ENCODE measurements at regions of chr17 and their contacts with region 1.

Region 1: DNA sequence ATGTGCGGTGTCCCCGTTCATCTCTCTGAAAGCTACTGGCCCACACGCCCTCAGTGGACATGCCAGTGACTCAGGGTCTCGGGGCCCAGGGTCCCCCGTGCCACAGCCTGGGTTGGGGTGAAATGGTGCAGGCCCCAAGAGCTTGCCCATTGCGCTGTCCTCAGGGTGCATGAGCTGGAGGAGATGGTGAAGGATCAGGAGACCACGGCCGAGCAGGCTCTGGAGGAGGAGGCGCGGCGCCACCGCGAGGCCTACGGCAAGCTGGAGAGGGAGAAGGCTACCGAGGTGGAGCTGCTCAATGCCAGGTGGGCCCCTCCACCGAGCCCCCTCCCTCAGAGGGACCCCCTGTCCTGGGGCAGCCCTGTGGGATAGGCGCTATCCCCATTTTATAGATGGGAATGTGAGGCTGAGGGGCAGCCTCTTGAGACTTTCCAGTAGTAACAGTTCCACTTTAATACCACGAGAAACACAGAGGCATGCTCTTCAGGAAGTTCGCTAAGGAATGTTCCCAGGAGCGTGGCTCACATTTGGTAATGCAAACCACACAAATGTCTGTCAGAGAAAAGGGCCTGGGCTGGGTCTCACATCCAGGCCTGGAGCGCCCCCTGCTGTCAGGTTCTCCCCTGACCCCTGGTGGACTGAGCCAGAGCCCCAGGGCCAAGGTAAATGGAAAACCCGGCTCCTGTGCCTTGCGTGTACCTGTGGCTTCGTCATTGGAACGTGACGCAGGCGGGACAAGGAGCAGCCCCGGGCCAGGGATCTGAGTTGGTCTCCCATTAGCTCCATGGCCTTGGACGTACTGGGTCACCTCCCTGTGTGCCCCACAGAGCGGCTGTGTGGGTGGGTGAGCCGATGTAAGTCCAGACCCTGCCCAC is 133.7 kb downstream of the RAB11FIP4 start:
- DNase-seq: peak; percentile 89
- ATAC-seq: peak; percentile 78
- H3K4me3 Mint-ChIP-seq: no peak overlapping the region
- H3K27ac Mint-ChIP-seq: peak overlapping the region; percentile 24
- H3K4me1 Mint-ChIP-seq: peaks cover 9% of the 10 kb centered on the region
- H3K27me3 Mint-ChIP-seq: no peaks in the 10 kb centered on the region
- CTCF ChIP-seq: peak; percentile 88

Region 2: DNA sequence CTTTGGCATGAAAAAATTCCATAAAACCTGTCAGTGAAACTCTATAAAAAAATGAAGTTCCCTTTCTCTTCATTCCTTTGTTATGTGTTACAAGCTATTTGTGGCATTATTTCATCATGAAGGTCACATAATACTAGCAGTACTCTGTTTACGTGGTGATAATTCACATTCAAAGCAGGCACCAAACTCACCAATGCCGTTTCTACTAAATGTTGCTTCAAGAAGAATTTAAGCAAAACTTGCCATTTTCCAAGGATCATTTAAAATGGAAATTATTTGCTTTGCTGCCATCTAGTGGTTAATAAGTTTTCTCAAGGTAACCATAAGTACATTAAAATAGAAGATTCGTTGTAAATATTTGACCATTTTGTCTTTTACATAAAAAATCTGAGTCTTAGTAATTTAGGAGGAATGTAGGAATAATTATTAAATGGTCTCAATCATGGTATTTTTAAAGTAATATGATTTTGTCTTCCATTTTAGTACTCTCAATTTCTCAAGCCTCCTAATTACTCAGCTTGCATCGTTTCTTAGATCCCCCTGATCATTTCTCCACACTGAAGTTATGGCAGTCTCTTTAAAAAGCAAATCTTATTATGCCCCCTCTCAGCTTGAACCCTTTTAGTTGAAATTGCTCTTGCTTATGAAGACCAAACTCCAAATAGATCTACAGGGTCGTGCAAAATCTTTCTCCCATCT is 309.0 kb before region 1 on chr17:
- CTCF ChIA-PET with region 1: no interaction called
- POLR2A ChIA-PET with region 1: no interaction called
- intact Hi-C with region 1: loop called (anchors 5 kb)
- DNase-seq: no peak
- ATAC-seq: no peak
- H3K4me3 Mint-ChIP-seq: no peak overlapping the region
- H3K27ac Mint-ChIP-seq: no peak overlapping the region
- H3K4me1 Mint-ChIP-seq: no peaks in the 10 kb centered on the region
- H3K27me3 Mint-ChIP-seq: no peaks in the 10 kb centered on the region
- CTCF ChIP-seq: peak; percentile 72

Region 3: DNA sequence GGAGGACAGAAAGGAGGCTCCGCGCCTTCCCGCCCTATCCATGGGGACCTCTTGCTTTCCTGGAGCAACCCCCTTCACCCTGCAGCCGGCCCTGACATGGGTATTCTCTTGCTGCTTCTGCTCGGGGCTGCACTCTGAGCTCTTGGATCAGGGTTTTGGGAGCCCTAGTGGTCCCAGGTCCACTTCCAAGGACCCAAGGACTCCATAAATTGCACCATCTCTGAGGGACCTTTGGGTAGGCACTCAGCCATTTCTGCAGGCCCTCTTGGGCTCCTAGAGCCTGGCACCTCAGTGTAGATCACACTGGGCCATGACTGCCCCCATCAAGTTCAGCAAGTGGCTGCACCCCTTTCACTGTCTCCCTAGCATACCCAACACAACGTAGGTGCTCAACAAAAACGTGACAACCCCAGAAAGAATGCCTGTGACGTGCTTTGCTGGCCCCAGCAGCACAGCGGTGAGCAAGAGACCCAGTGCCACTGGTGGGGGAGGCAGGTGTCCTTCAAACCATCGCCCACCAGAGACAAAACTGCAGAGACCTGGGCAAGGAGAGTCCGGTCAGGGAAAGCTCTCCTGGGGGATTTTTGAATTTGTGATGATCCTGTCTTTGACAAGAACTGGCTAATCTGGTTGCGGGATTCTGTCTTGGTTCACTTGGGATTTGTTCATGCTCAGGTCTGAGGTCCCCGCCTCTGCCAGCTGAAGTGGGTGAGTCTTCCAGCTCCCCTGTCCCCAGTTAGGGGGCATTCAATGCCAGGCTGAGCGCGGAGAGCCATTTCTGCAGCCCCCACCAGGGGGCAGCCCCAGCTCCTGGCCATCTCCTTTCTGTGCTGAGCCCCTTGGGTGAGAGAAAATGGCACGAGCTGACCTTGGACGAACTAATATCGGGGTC is 136.1 kb before region 1 on chr17:
- CTCF ChIA-PET with region 1: interaction called, 53 read pairs
- POLR2A ChIA-PET with region 1: no interaction called
- intact Hi-C with region 1: loop called (anchors 1 kb)
- DNase-seq: peak; percentile 46
- ATAC-seq: peak; percentile 76
- H3K4me3 Mint-ChIP-seq: no peak overlapping the region
- H3K27ac Mint-ChIP-seq: no peak overlapping the region
- H3K4me1 Mint-ChIP-seq: peaks cover 15% of the 10 kb centered on the region
- H3K27me3 Mint-ChIP-seq: peaks cover 31% of the 10 kb centered on the region
- CTCF ChIP-seq: no peak

Region 4: DNA sequence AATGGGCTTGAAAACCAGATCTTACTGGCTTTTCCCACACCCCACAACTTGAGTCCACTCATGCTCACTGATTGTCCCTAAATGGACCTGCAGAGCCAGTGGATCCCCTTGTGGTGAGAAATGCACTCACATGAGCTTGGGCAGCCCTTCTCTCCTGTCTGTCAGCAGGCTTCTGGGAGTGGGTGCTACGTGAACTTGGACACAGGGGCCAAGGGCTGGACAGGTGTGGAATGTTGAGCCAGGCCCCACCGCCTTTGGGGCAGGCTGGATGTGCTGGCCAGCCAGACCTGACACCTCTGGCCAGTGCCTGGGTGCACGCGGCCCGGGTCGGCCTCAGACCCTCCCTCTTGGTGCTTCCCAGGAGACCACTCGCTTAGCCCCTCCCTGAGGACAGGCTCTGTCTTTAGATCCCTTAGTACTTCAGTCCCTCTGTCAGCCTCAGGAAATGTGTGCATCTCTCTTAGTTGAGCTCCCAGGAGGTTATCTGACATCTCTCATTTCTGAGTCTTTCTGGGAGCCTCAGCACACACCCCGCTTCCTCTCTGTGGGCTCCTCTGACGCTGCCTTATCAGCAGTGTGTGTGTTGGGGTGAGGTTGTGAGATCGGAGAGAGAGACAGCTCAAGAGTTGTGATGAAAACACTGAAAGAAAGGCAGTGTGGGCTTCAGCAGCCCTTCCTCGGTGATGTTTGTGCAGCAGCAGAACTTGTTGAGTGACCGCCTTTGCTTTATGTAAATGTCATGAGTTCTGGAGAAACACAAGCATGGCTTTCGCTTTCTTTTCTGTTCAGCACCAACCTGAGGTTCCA is 16.7 kb before region 1 on chr17:
- CTCF ChIA-PET with region 1: interaction called, 43 read pairs
- POLR2A ChIA-PET with region 1: interaction called, 4 read pairs
- intact Hi-C with region 1: loop called (anchors 2 kb)
- DNase-seq: no peak
- ATAC-seq: peak; percentile 77
- H3K4me3 Mint-ChIP-seq: peak overlapping the region; percentile 88
- H3K27ac Mint-ChIP-seq: peak overlapping the region; percentile 96
- H3K4me1 Mint-ChIP-seq: peaks cover 65% of the 10 kb centered on the region
- H3K27me3 Mint-ChIP-seq: no peaks in the 10 kb centered on the region
- CTCF ChIP-seq: no peak

Region 5: GRCh38 chr17:31842183-31843069 is 317.3 kb after region 1 on chr17:
- CTCF ChIA-PET with region 1: interaction called, 57 read pairs
- POLR2A ChIA-PET with region 1: interaction called, 3 read pairs
- intact Hi-C with region 1: loop called (anchors 1 kb)
- DNase-seq: peak; percentile 48
- ATAC-seq: peak; percentile 98
- H3K4me3 Mint-ChIP-seq: no peak overlapping the region
- H3K27ac Mint-ChIP-seq: no peak overlapping the region
- H3K4me1 Mint-ChIP-seq: no peaks in the 10 kb centered on the region
- H3K27me3 Mint-ChIP-seq: peaks cover 3% of the 10 kb centered on the region
- CTCF ChIP-seq: peak; percentile 51